MCF 10A (cell line): ENCODE measurements at regions of chr1 and their contacts with region 1.

Region 1: GRCh38 chr1:77533660-77534305 is 148.7 kb downstream of the ZZZ3 start:
- DNase-seq: peak; percentile 71
- H3K4me3 Mint-ChIP-seq: no peak overlapping the region
- H3K27ac Mint-ChIP-seq: no peak overlapping the region
- H3K4me1 Mint-ChIP-seq: peaks cover 14% of the 10 kb centered on the region
- H3K27me3 Mint-ChIP-seq: no peaks in the 10 kb centered on the region
- CTCF ChIP-seq: peak; percentile 84

Region 2: GRCh38 chr1:77143529-77144121 is 390.2 kb before region 1 on chr1:
- CTCF ChIA-PET with region 1: interaction called, 35 read pairs
- POLR2A ChIA-PET with region 1: interaction called, 3 read pairs
- intact Hi-C with region 1: loop called (anchors 1 kb)
- DNase-seq: peak; percentile 8
- H3K4me3 Mint-ChIP-seq: no peak overlapping the region
- H3K27ac Mint-ChIP-seq: no peak overlapping the region
- H3K4me1 Mint-ChIP-seq: no peaks in the 10 kb centered on the region
- H3K27me3 Mint-ChIP-seq: no peaks in the 10 kb centered on the region
- CTCF ChIP-seq: peak; percentile 36

Region 3: GRCh38 chr1:77156214-77156613 is 377.6 kb before region 1 on chr1:
- CTCF ChIA-PET with region 1: interaction called, 12 read pairs
- POLR2A ChIA-PET with region 1: interaction called, 6 read pairs
- intact Hi-C with region 1: no loop called
- DNase-seq: no peak
- H3K4me3 Mint-ChIP-seq: no peak overlapping the region
- H3K27ac Mint-ChIP-seq: no peak overlapping the region
- H3K4me1 Mint-ChIP-seq: peaks cover 2% of the 10 kb centered on the region
- H3K27me3 Mint-ChIP-seq: no peaks in the 10 kb centered on the region
- CTCF ChIP-seq: no peak

Region 4: GRCh38 chr1:77219166-77219887 is 314.5 kb before region 1 on chr1 and contains the start of gene PIGK:
- CTCF ChIA-PET with region 1: interaction called, 4 read pairs
- POLR2A ChIA-PET with region 1: interaction called, 4 read pairs
- intact Hi-C with region 1: loop called (anchors 2 kb)
- DNase-seq: peak; percentile 88
- H3K4me3 Mint-ChIP-seq: peak within 1 kb of the TSS; percentile 94
- H3K27ac Mint-ChIP-seq: peak within 1 kb of the TSS; percentile 77
- H3K4me1 Mint-ChIP-seq: peaks cover 23% of the 10 kb centered on the region
- H3K27me3 Mint-ChIP-seq: no peaks in the 10 kb centered on the region
- CTCF ChIP-seq: no peak
- total RNA-seq, gene PIGK: 22.9 TPM in 2 replicates

Region 5: DNA sequence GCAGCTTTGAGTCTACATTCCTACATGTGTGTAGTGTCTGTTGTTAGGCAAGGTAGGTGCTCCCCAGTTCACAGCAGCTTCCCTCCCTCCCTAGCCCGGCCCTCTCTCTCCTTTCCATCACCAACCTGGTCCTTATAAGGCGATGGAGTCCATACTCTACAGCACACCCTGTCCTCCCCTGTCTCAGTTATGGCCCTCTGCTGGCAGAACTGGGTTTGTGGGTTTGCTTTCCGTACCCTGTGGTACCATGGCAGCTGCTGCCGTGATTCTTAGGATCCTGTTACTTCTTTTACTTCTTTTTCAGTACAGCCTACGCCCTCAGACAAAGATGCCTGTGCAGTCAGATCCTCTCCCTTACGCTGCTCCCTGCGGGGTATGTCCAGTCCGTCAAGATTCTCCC is 220.3 kb before region 1 on chr1:
- CTCF ChIA-PET with region 1: no interaction called
- POLR2A ChIA-PET with region 1: no interaction called
- intact Hi-C with region 1: loop called (anchors 10 kb)
- DNase-seq: peak; percentile 38
- H3K4me3 Mint-ChIP-seq: no peak overlapping the region
- H3K27ac Mint-ChIP-seq: no peak overlapping the region
- H3K4me1 Mint-ChIP-seq: no peaks in the 10 kb centered on the region
- H3K27me3 Mint-ChIP-seq: no peaks in the 10 kb centered on the region
- CTCF ChIP-seq: peak; percentile 25

Region 6: DNA sequence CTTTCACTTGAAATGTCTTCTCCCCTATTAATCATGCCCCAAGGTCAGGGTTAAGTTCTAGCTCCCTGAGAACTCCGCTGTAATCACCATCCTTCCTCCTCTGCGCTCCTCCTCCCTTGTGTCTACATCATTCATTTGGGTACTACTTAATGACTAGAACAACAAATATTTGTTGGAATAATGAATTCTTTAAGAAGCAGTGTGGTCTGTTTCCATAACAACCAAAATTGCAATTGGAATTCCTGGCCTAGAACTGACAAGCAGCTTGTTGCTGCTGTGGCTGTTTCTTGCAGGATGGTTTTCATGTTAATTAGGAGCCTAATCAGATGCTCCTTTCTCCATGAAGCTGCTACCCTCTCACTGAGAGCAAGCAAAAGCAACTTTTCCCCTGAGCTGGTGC is 43.9 kb before region 1 on chr1:
- CTCF ChIA-PET with region 1: interaction called, 10 read pairs
- POLR2A ChIA-PET with region 1: no interaction called
- intact Hi-C with region 1: no loop called
- DNase-seq: no peak
- H3K4me3 Mint-ChIP-seq: no peak overlapping the region
- H3K27ac Mint-ChIP-seq: no peak overlapping the region
- H3K4me1 Mint-ChIP-seq: no peaks in the 10 kb centered on the region
- H3K27me3 Mint-ChIP-seq: no peaks in the 10 kb centered on the region
- CTCF ChIP-seq: no peak

Region 7: GRCh38 chr1:77514921-77515776 is 18.6 kb before region 1 on chr1:
- CTCF ChIA-PET with region 1: interaction called, 16 read pairs
- POLR2A ChIA-PET with region 1: no interaction called
- intact Hi-C with region 1: no loop called
- DNase-seq: no peak
- H3K4me3 Mint-ChIP-seq: no peak overlapping the region
- H3K27ac Mint-ChIP-seq: no peak overlapping the region
- H3K4me1 Mint-ChIP-seq: no peaks in the 10 kb centered on the region
- H3K27me3 Mint-ChIP-seq: no peaks in the 10 kb centered on the region
- CTCF ChIP-seq: no peak